ENCODE measurements at regions of chrX and their contacts with region 1.

Region 1: DNA sequence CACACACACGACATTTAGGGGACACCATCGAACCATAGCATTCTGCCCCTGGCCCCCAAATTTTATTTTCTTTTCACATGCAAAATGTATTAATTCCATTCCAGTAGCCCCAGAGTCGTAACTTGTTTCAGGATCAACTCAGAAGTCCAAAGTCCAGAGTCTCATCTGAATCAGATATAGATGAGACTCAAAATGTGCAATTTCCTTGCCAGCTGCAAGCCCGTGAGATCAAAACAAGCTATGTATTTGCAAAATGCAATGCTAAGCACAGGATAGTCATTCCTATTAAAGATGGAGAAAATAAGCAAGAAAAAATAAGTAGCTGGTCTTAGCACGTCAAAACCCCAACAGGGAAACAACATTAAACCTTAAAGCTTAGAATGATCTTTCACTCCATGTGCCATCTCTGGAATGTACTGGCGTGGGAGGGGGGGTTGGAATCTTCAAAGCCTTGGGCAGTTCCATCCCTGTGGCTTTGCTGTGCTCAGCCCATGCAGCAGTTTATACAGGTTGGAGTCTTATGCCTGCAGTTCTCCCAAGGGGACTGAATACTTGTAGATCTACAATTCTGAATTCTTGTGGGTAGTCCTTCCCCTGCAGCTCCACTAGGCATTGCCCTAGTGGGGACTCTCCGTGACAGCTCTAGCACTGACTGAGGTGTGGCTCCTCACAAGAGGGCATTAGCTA is 47.7 kb upstream of the SYTL5 start:
- DNase-seq: no peak
- H3K4me3 ChIP-seq: no peak overlapping the region
- CTCF ChIP-seq: no peak
- POLR2A ChIP-seq: no peak

Region 2: GRCh38 chrX:37854148-37854547 is 104.5 kb before region 1 on chrX:
- intact Hi-C with region 1: no loop called
- DNase-seq: no peak
- H3K4me3 ChIP-seq: no peak overlapping the region
- CTCF ChIP-seq: no peak
- POLR2A ChIP-seq: no peak

Region 3: GRCh38 chrX:38142610-38143009 is 183.9 kb after region 1 on chrX:
- intact Hi-C with region 1: loop called (anchors 10 kb)
- DNase-seq: peak in 1 of 2 donors; percentile 17
- H3K4me3 ChIP-seq: no peak overlapping the region
- CTCF ChIP-seq: no peak
- POLR2A ChIP-seq: no peak